ENCODE measurements at regions of chr7 and their contacts with region 1.

Region 1: DNA sequence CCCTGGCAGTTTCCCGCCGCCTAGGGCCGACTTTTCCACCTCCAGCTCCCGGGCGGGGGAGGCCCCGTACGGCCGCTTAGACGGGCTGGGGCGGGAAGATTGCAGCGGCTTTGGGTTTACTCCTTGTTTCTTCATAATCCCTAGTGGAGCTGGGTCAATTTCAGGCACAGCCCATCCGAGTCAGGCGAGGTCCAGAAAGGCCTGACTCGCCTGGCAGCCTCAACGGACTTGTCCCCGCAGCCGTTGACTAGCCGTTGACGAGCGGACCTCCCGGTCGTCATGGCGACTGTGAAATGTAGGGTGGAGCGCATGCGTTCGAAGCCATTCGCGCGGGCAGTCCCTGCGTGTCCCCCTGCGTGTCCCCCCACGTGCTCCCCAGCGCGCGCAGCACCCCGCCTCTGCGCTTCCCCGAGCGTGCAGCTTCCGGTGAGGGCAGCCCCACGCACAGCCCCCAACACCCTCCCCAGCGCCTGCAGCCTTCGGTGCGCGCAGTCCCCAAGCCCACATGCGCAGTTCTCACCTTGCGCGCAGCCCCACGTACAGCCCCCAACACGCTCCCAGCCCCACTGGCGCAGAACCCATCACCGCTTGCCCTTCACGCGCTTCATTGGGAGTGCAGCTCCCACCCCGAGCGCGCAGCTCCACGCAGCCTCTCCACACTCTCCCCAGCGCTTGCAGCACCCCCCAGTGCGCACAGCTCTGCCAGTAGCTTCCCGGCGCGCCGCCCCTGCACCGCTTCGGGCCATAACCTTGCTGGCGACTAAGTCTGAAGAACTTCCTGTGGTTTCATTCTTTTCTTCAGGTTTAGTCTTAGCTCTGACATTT is 67.8 kb downstream of the TBX20 start:
- DNase-seq: no peak
- ATAC-seq: no peak
- H3K4me3 ChIP-seq: no peak overlapping the region
- H3K27ac ChIP-seq: no peak overlapping the region
- H3K4me1 ChIP-seq: no peaks in the 10 kb centered on the region
- H3K27me3 ChIP-seq: no peaks in the 10 kb centered on the region
- CTCF ChIP-seq: no peak
- POLR2A ChIP-seq: no peak
- RAD21 ChIP-seq: no peak

Region 2: GRCh38 chr7:35232994-35233393 is 46.9 kb after region 1 on chr7:
- CTCF ChIA-PET with region 1: no interaction called
- POLR2A ChIA-PET with region 1: no interaction called
- RAD21 ChIA-PET with region 1: no interaction called
- intact Hi-C with region 1: no loop called
- DNase-seq: no peak
- ATAC-seq: no peak
- H3K4me3 ChIP-seq: no peak overlapping the region
- H3K27ac ChIP-seq: no peak overlapping the region
- H3K4me1 ChIP-seq: no peaks in the 10 kb centered on the region
- H3K27me3 ChIP-seq: no peaks in the 10 kb centered on the region
- CTCF ChIP-seq: no peak
- POLR2A ChIP-seq: no peak
- RAD21 ChIP-seq: no peak

Region 3: DNA sequence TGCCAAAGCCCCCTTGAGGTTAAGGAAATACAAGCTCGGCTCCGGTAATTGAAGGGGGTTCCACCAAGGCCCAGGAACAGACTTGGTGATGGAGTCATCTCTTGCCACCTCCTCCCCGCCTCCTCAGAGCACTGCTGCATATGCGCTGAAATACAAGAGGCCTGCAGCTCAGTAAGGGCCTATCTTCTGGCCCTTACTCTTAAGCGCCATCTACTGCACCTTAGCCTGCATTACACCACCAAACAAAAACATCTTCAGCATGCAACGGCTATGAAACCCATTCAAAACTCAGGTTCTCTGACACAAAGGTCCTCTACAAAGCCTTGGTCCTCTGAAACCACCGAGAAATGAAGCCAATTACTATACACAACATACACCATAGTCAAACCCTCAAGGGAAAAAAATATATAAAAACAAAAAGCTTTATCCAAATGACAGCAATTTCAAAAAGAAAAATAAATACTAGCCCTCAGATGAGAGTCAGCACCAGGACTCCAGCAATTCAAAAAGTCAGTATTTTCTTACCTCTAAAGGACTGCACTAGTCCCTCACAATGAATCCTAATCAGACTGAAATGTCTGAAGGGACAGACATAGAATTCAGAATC is 244.5 kb after region 1 on chr7:
- CTCF ChIA-PET with region 1: no interaction called
- POLR2A ChIA-PET with region 1: no interaction called
- RAD21 ChIA-PET with region 1: no interaction called
- intact Hi-C with region 1: loop called (anchors 10 kb)
- DNase-seq: peak; percentile 45
- ATAC-seq: peak; percentile 98
- H3K4me3 ChIP-seq: no peak overlapping the region
- H3K27ac ChIP-seq: no peak overlapping the region
- H3K4me1 ChIP-seq: no peaks in the 10 kb centered on the region
- H3K27me3 ChIP-seq: no peaks in the 10 kb centered on the region
- CTCF ChIP-seq: peak; percentile 55 to 88 (median 81); a peak in 5 of 6 replicates
- POLR2A ChIP-seq: no peak
- RAD21 ChIP-seq: peak; percentile 68

Region 4: GRCh38 chr7:35537067-35538023 is 351.2 kb after region 1 on chr7:
- CTCF ChIA-PET with region 1: no interaction called
- POLR2A ChIA-PET with region 1: no interaction called
- RAD21 ChIA-PET with region 1: no interaction called
- intact Hi-C with region 1: loop called (anchors 5 kb)
- DNase-seq: peak; percentile 53
- ATAC-seq: peak; percentile 99
- H3K4me3 ChIP-seq: peak overlapping the region; percentile 28 to 40
- H3K27ac ChIP-seq: no peak overlapping the region
- H3K4me1 ChIP-seq: peaks cover 0 to 11% of the 10 kb centered on the region in 2 experiments; a peak in 1 of 4 replicates
- H3K27me3 ChIP-seq: no peaks in the 10 kb centered on the region
- CTCF ChIP-seq: peak; percentile 78 to 92 (median 91)
- POLR2A ChIP-seq: no peak
- RAD21 ChIP-seq: peak; percentile 88

Region 5: GRCh38 chr7:35624299-35625186 is 438.4 kb after region 1 on chr7:
- CTCF ChIA-PET with region 1: no interaction called
- POLR2A ChIA-PET with region 1: no interaction called
- RAD21 ChIA-PET with region 1: no interaction called
- intact Hi-C with region 1: loop called (anchors 2 kb)
- DNase-seq: peak; percentile 23
- ATAC-seq: peak; percentile 91
- H3K4me3 ChIP-seq: no peak overlapping the region
- H3K27ac ChIP-seq: no peak overlapping the region
- H3K4me1 ChIP-seq: no peaks in the 10 kb centered on the region
- H3K27me3 ChIP-seq: no peaks in the 10 kb centered on the region
- CTCF ChIP-seq: peak; percentile 63 to 94 (median 80); a peak in 5 of 6 replicates
- POLR2A ChIP-seq: no peak
- RAD21 ChIP-seq: peak; percentile 86

Region 6: GRCh38 chr7:35889001-35889400 is 702.9 kb after region 1 on chr7:
- CTCF ChIA-PET with region 1: no interaction called
- POLR2A ChIA-PET with region 1: no interaction called
- RAD21 ChIA-PET with region 1: no interaction called
- intact Hi-C with region 1: loop called (anchors 10 kb)
- DNase-seq: no peak
- ATAC-seq: no peak
- H3K4me3 ChIP-seq: no peak overlapping the region
- H3K27ac ChIP-seq: no peak overlapping the region
- H3K4me1 ChIP-seq: no peaks in the 10 kb centered on the region
- H3K27me3 ChIP-seq: no peaks in the 10 kb centered on the region
- CTCF ChIP-seq: no peak
- POLR2A ChIP-seq: no peak
- RAD21 ChIP-seq: no peak

Measured in HCT116 (cell line).